Aorta (tissue), 5 donors: ENCODE measurements at regions of chr12 and their contacts with region 1.

Region 1: DNA sequence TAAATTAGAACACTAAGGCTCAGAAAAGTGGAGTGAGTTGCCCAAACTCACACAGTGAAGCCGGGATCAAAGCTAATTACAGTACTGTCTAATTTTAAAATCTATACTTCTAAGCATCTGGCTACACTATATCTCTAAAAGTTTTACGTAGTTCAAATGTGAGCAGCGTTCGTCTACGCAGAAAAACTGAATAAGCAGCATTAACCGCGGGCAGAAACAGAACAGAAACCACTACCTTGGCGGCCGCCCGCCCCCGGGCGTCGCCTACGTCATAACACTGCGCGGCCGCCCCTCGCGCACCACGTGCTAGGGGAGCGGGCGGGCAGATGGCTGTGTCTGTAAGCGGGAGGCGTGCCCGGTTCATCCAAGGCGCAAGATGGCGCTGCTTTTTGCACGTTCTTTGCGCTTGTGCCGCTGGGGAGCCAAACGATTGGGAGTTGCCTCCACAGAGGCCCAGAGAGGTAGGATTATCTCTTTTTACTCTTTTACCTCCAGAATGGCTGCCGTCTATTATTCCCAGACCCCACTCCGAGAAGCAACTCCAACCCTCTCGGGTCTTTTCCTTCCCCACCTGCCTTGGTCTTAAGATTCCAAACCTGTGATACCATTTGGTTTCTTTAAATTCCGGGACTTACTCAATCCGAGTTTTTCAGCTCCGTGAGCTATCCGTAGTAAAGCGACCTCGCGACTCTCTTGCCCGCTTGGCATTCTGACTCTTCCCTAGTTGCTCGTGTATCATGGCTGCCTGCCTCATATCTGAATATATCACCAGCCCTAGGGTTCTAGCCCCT is at the start of gene SPRYD4:
- DNase-seq: peak; percentile 95 to 97
- ATAC-seq: peak; percentile 98
- H3K4me3 ChIP-seq: peak within 1 kb of the TSS; percentile 66 to 91
- H3K27ac ChIP-seq: peak within 1 kb of the TSS; percentile 28 to 62
- H3K4me1 ChIP-seq: no peaks in the 10 kb centered on the region
- H3K27me3 ChIP-seq: no peaks in the 10 kb centered on the region
- total RNA-seq, gene SPRYD4: 2.1 to 3.6 TPM

Region 2: GRCh38 chr12:56315622-56316473 is 152.6 kb before region 1 on chr12 and contains the start of gene CNPY2:
- intact Hi-C with region 1: loop called in 1 of 2 experiments (anchors 10 kb)
- DNase-seq: peak; percentile 98
- ATAC-seq: peak; percentile 97
- H3K4me3 ChIP-seq: peak within 1 kb of the TSS; percentile 53 to 63
- H3K27ac ChIP-seq: peak within 1 kb of the TSS in 1 of 2 donors; percentile 30
- H3K4me1 ChIP-seq: no peaks in the 10 kb centered on the region
- H3K27me3 ChIP-seq: no peaks in the 10 kb centered on the region
- total RNA-seq, gene CNPY2: 72.2 to 92.0 TPM

Region 3: GRCh38 chr12:56359851-56360767 is 108.3 kb before region 1 on chr12 and contains the start of gene STAT2:
- intact Hi-C with region 1: loop called in 1 of 2 experiments (anchors 10 kb)
- DNase-seq: peak; percentile 99 to 100
- ATAC-seq: peak; percentile 99
- H3K4me3 ChIP-seq: peak within 1 kb of the TSS; percentile 78 to 89
- H3K27ac ChIP-seq: peak within 1 kb of the TSS; percentile 14 to 92
- H3K4me1 ChIP-seq: no peaks in the 10 kb centered on the region
- H3K27me3 ChIP-seq: no peaks in the 10 kb centered on the region
- total RNA-seq, gene STAT2: 129 to 191 TPM

Region 4: DNA sequence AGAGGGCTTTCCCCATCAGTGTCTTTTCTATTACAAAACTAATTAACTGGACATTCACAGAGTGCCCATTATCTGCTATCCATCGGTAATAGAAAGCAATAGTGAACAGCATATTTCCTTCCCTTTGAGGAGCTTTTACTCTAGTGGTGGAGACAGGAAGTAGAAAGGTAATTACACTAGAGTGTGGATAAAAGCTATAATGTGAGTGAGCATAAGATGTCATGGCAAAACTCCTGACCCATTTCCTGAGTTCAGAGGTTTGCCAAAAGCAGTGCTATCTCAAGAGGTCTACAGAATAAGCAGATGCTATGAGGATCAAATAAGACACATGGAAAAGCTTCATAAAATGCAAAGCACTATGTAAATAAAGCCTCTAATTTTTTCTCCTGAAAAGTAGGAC is 43.2 kb before region 1 on chr12:
- intact Hi-C with region 1: no loop called
- DNase-seq: no peak
- ATAC-seq: no peak
- H3K4me3 ChIP-seq: no peak overlapping the region
- H3K27ac ChIP-seq: no peak overlapping the region
- H3K4me1 ChIP-seq: no peaks in the 10 kb centered on the region
- H3K27me3 ChIP-seq: no peaks in the 10 kb centered on the region

Region 5: DNA sequence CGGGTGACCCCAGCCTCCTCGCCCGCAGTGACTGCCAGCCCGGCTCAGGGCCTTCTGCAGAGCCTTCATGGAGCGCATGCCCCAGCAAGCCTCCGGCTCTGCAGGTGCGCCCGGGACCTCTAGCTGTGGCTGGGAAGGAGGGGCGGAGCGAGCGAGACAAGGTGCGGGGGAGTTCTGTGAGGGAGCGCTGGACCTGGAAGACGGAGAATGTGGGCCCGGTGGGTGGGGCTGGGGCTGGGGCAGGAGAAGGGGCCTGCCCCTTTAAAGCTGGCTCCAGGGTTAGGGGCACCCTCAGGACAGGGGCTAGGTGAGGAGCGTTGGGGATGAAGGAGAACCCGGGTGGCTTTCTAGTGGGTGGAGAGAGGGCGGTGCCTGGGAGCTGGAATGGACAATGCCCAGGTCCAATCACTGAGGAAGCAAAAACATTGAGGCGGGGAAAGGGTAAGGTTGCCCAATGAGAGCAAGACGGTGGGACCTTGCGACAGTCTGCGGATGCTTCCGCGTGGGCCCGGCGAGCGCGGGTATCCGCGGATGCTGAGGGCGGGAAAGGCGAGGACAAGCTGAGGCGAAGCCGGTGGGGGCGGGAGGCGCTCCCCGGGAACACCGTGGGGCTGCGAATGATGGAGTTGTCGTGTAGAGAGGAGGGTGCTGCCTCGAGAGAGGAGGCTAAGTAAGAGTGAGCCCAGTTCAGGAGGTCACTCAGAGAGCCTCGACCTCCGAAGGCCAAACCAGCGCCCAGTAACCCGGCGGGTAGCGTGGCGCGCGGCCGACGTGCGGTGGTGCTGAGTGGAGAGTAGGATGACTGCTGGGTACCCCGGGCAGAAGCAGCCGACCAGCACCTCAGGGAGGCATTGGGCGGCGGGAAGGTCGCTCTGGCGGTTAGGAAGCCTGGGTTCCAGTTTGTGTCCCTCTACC is 19.9 kb after region 1 on chr12 and contains the start of gene GLS2:
- intact Hi-C with region 1: no loop called
- DNase-seq: peak; percentile 81 to 89
- ATAC-seq: peak; percentile 93
- H3K4me3 ChIP-seq: peak within 1 kb of the TSS; percentile 9 to 58
- H3K27ac ChIP-seq: no peak within 1 kb of the TSS
- H3K4me1 ChIP-seq: no peaks in the 10 kb centered on the region
- H3K27me3 ChIP-seq: no peaks in the 10 kb centered on the region
- total RNA-seq, gene GLS2: 0.58 to 1.5 TPM

Region 6: DNA sequence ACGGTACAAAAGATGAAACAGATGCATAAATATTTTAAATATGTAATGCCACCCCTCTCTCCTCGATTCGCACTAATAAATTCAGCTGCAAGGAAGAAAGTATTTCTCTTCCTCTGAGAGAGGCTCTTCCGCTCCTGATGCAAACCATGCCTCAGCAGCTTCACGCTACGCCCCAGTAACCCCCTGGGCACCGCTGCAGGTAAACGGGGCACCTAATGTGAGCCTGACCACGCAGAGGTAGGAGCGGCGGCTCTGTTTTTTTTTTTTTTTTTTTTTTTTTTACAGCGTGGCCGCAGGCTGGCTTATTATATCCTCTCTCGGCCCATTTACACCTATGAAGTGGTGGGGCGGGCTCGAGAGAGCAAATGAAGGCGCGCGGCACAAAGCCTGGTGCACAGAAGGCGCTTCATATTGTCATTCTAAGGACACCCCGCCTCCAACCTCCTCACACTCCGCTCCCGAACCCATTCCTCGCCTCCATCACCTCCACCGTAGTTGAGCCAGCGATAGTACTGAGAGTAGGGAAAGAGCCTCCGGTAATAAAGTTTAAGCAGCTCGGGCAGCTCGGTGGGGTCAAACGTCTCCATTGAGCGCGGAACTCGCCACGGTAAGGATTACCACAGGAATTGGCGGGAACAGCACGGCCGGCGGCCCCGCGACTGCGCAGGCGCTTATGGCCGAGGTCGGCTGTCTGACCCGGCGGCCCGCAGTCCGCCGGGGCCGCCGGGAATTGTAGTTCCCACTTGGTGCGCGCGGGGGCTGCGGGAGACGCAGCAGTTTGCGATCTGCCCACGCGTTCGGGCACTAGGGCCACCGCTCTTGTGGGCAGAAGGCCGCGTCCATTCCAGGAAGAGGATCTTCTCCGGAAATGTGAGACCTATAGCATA is 283.5 kb after region 1 on chr12 and contains the start of gene PRIM1:
- intact Hi-C with region 1: no loop called
- DNase-seq: peak; percentile 90 to 94
- ATAC-seq: peak; percentile 96
- H3K4me3 ChIP-seq: peak within 1 kb of the TSS; percentile 2 to 76
- H3K27ac ChIP-seq: no peak within 1 kb of the TSS
- H3K4me1 ChIP-seq: no peaks in the 10 kb centered on the region
- H3K27me3 ChIP-seq: no peaks in the 10 kb centered on the region
- total RNA-seq, gene PRIM1: 3.2 to 4.6 TPM